H1 (cell line): ENCODE measurements at regions of chr17 and their contacts with region 1.

Region 1: GRCh38 chr17:36057911-36058310 is 6.2 kb upstream of the CCL18 start:
- DNase-seq: no peak
- H3K4me3 ChIP-seq: no peak overlapping the region
- H3K27ac ChIP-seq: no peak overlapping the region
- H3K4me1 ChIP-seq: no peaks in the 10 kb centered on the region
- H3K27me3 ChIP-seq: no peaks in the 10 kb centered on the region; a peak in 1 of 7 replicates
- CTCF ChIP-seq: no peak
- EP300 ChIP-seq: no peak
- POLR2A ChIP-seq: no peak
- RAD21 ChIP-seq: no peak

Region 2: GRCh38 chr17:35931794-35932425 is 126.0 kb before region 1 on chr17:
- CTCF ChIA-PET with region 1: no interaction called
- POLR2A ChIA-PET with region 1: no interaction called
- DNase-seq: no peak
- H3K4me3 ChIP-seq: no peak overlapping the region
- H3K27ac ChIP-seq: no peak overlapping the region
- H3K4me1 ChIP-seq: peaks cover 0 to 6% (median 3%) of the 10 kb centered on the region in 4 experiments; a peak in 5 of 7 replicates
- H3K27me3 ChIP-seq: no peaks in the 10 kb centered on the region; a peak in 2 of 7 replicates
- CTCF ChIP-seq: no peak
- EP300 ChIP-seq: no peak
- POLR2A ChIP-seq: no peak
- RAD21 ChIP-seq: no peak

Region 3: DNA sequence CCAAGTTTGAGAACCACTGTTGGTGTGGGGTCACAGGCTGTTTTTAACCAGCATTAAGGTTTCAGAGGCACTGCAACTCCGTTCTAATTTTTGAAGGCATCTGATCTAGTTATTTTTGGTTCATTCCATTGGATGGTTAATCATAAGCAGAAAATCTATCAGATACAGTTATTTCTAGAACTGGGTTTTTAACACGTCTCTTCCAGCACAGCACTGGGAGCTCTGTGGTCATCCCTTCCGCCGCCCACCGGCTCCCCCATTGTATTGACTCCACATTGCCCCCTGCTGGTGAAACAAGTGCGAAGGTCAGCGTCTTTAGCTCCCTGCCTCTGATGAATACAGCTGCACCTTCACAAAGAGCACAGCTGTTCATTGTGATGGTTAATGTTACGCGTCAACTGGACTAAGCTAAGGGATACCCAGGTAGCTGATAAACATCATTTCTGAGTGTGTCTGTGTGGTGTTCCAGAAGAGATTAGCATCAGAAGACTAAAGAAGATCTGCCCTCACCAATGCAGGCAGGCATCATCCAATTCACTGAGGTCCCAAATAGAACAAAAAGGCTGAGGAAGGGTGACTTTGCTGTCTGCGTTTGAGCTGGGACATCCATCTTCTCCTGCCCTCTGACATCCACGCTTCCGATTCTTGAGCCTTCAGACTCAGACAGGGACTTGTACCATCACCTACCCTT is 14.7 kb after region 1 on chr17:
- CTCF ChIA-PET with region 1: interaction called, 13 read pairs
- POLR2A ChIA-PET with region 1: no interaction called
- DNase-seq: peak; percentile 27 to 88
- H3K4me3 ChIP-seq: no peak overlapping the region
- H3K27ac ChIP-seq: no peak overlapping the region
- H3K4me1 ChIP-seq: no peaks in the 10 kb centered on the region
- H3K27me3 ChIP-seq: no peaks in the 10 kb centered on the region
- CTCF ChIP-seq: peak; percentile 72 to 81 (median 79)
- EP300 ChIP-seq: no peak
- POLR2A ChIP-seq: no peak
- RAD21 ChIP-seq: peak; percentile 65 to 70